Upper lobe of right lung (tissue), 1 donor: ENCODE measurements at regions of chr13 and their contacts with region 1.

Region 1: GRCh38 chr13:71880753-71881541 is 13.9 kb upstream of the DACH1 start:
- DNase-seq: no peak
- ATAC-seq: no peak
- H3K4me3 ChIP-seq: no peak overlapping the region
- H3K27ac ChIP-seq: no peak overlapping the region
- H3K4me1 ChIP-seq: no peaks in the 10 kb centered on the region
- H3K27me3 ChIP-seq: no peaks in the 10 kb centered on the region
- CTCF ChIP-seq: no peak

Region 2: GRCh38 chr13:71316792-71317363 is 564.1 kb before region 1 on chr13:
- intact Hi-C with region 1: loop called (anchors 10 kb)
- DNase-seq: no peak
- ATAC-seq: no peak
- H3K4me3 ChIP-seq: no peak overlapping the region
- H3K27ac ChIP-seq: no peak overlapping the region
- H3K4me1 ChIP-seq: no peaks in the 10 kb centered on the region
- H3K27me3 ChIP-seq: no peaks in the 10 kb centered on the region
- CTCF ChIP-seq: no peak